AG04450 (cell line): ENCODE measurements at regions of chr12 and their contacts with region 1.

Region 1: DNA sequence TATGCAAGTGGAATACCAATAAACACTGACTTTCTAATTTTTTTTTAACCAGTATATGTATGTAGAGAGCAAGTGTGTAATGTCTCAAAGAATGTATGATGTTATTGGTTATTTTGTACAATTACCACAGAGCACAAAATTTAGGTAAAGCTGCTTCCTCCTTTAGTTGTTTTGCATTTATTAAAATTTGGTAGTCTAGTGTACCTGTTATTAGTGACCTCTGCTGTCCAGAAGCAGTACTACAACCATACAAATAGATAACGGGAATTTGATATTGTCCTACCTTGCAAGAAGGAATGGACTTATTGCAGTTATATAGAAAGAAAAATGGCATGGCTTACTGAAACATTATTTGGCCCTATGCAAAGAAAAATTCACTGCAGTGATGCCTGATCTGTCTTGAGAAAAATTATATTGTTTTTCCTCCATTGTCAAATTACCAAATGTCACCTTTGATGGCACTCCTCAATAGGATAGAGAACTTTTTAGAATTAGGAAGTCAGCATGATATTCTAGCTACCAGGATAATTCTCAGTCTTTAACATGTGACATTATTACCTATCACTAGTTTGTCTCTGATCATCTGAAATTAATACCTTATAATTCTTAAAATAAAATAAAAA is 153.9 kb upstream of the RMST start:
- DNase-seq: peak; percentile 36
- H3K4me3 ChIP-seq: no peak overlapping the region
- H3K27ac ChIP-seq: no peak overlapping the region
- H3K27me3 ChIP-seq: no peaks in the 10 kb centered on the region
- CTCF ChIP-seq: peak; percentile 68

Region 2: GRCh38 chr12:96578526-96579125 is 730.1 kb before region 1 on chr12:
- CTCF ChIA-PET with region 1: interaction called, 47 read pairs
- POLR2A ChIA-PET with region 1: no interaction called
- DNase-seq: peak; percentile 33
- H3K4me3 ChIP-seq: no peak overlapping the region
- H3K27ac ChIP-seq: no peak overlapping the region
- H3K27me3 ChIP-seq: no peaks in the 10 kb centered on the region
- CTCF ChIP-seq: peak; percentile 72

Region 3: GRCh38 chr12:96985480-96986362 is 323.0 kb before region 1 on chr12:
- CTCF ChIA-PET with region 1: interaction called, 33 read pairs
- POLR2A ChIA-PET with region 1: no interaction called
- DNase-seq: no peak
- H3K4me3 ChIP-seq: peak overlapping the region; percentile 47
- H3K27ac ChIP-seq: no peak overlapping the region
- H3K27me3 ChIP-seq: peaks cover 23% of the 10 kb centered on the region
- CTCF ChIP-seq: peak; percentile 55

Region 4: DNA sequence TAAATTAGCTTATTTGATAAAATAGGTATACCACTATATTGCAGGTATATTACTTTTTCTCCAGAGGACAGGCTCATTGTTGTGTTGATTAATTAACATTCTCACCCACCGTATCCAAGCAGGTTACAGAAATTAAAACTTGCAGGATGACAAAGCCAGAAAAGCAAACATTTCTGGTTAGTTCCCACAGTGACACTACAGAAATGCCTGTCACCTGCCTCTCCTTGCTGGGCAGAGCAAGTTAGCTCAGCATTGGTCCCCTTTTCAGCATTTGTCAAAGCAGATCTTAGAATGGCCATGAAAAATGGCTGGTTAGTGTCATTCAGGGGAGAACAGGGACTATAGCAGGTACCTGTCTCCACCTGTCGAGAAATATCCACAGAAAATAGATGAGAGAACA is 192.7 kb after region 1 on chr12:
- CTCF ChIA-PET with region 1: no interaction called
- POLR2A ChIA-PET with region 1: no interaction called
- DNase-seq: no peak
- H3K4me3 ChIP-seq: no peak overlapping the region
- H3K27ac ChIP-seq: no peak overlapping the region
- H3K27me3 ChIP-seq: no peaks in the 10 kb centered on the region
- CTCF ChIP-seq: no peak